Activated CD4-positive, alpha-beta T cell treated with anti-CD3 and anti-CD28 coated beads for 36 hours (primary cell): ENCODE measurements at regions of chr10 and their contacts with region 1.

Region 1: DNA sequence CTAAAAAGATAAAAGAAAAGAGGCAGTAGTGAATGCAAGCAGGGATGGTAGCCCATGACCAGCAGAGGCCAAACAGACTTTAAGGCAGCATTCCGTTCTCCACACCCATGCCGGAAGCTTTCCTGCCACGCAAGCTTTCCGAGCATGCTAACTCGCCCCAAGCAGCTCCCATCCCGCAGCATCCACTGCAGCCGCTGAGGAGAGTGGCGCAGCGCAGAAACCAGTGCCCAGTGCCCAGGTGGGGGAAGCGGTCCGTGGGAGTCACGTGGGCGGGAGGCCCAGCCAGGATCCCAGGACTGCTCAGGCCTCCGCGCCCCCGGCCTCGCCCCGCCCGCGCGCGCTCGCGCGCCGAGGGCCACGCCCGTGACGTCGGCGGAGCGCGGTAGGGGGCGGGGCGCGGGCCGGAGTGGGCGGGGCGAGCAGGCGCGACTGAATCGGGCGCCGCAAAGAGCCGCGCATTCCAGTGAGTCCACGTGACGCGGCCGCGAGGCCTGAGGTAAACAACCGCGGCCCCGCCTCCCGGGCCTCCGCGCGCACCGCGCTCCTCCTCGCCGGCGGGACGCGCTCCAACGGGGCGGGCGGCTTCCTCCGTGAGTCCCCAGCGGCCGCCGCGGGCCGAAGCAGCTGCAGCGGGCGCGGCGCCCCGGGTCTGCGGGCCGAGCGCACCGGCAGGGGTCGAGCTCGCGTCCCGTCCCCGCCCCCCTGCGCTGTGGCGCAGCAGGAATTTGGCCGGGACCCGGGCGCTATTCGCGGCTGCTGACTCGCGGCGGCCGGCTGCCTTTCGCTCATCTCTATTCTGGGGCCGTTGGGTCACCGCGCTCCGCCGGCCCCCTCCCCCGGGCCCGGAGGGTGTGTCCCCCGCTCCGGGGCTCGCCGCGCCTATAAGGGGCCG is at the start of gene OTUD1:
- DNase-seq: peak; percentile 96
- ATAC-seq: peak; percentile 88
- H3K4me3 Mint-ChIP-seq: peak within 1 kb of the TSS; percentile 85
- H3K27ac Mint-ChIP-seq: peak within 1 kb of the TSS; percentile 91
- H3K4me1 Mint-ChIP-seq: peaks cover 28% of the 10 kb centered on the region
- H3K27me3 Mint-ChIP-seq: no peaks in the 10 kb centered on the region
- total RNA-seq, gene OTUD1: 5.7 to 6.5 TPM

Region 2: DNA sequence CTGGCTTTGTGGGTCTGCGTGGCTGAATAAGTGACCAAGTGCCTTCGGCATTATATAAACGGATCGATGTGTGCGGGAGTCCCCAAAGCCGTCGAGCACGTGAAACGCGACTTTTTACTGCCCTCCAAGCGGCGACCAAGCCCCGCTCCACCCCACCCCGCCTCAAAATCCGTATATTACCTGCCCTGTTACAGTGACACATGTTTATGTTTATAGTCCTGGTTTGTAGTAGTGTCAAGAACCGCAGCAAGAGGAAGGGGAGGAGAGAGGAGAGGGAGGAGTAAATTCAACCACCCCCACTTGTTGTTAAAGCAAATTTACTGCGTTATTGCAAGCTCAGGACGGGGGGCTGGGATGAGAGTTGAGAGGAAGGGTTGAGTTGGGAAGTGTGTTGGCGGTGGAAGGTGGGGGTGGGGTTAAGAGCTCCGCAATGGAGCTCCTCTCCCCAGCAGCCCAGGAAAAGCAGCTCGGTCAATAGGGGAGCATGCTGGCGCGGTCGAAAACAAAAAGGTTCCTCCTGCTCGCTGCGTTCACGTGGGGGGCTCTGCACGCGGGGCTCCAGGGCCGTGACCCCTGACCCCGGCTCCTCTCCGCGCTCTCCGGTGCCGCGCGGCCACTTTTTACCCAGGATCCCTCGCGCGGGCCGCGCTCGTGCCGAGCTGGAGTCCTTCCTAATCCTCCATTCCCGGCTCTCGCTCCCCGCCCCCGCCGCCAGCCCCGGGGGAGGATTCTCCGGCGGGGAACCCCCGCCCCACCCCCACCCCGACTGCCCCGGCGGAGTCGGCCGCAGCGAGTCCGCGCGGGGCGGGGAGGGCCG is 1913.2 kb before region 1 on chr10 and contains the start of gene SKIDA1:
- CTCF ChIA-PET with region 1: no interaction called
- POLR2A ChIA-PET with region 1: no interaction called
- intact Hi-C with region 1: loop called in 1 of 2 experiments (anchors 10 kb)
- DNase-seq: peak; percentile 81
- ATAC-seq: peak; percentile 71
- H3K4me3 Mint-ChIP-seq: peak within 1 kb of the TSS; percentile 80
- H3K27ac Mint-ChIP-seq: peak within 1 kb of the TSS; percentile 96
- H3K4me1 Mint-ChIP-seq: peaks cover 24% of the 10 kb centered on the region
- H3K27me3 Mint-ChIP-seq: peaks cover 17% of the 10 kb centered on the region
- total RNA-seq, gene SKIDA1: 0.32 to 0.54 TPM

Region 3: GRCh38 chr10:23095404-23095965 is 343.3 kb before region 1 on chr10 and contains the start of gene MSRB2:
- CTCF ChIA-PET with region 1: no interaction called
- POLR2A ChIA-PET with region 1: no interaction called
- intact Hi-C with region 1: loop called (anchors 1 to 5 kb)
- DNase-seq: peak; percentile 84
- ATAC-seq: peak; percentile 58
- H3K4me3 Mint-ChIP-seq: peak within 1 kb of the TSS; percentile 95
- H3K27ac Mint-ChIP-seq: peak within 1 kb of the TSS; percentile 92
- H3K4me1 Mint-ChIP-seq: peaks cover 39% of the 10 kb centered on the region
- H3K27me3 Mint-ChIP-seq: no peaks in the 10 kb centered on the region
- total RNA-seq, gene MSRB2: 8.2 to 9.0 TPM

Region 4: GRCh38 chr10:23362879-23363792 is 75.7 kb before region 1 on chr10:
- CTCF ChIA-PET with region 1: interaction called, 3 read pairs
- POLR2A ChIA-PET with region 1: no interaction called
- intact Hi-C with region 1: loop called (anchors 1 to 2 kb)
- DNase-seq: peak; percentile 67
- ATAC-seq: peak; percentile 75
- H3K4me3 Mint-ChIP-seq: peak overlapping the region; percentile 39
- H3K27ac Mint-ChIP-seq: peak overlapping the region; percentile 96
- H3K4me1 Mint-ChIP-seq: peaks cover 60% of the 10 kb centered on the region
- H3K27me3 Mint-ChIP-seq: no peaks in the 10 kb centered on the region

Region 5: DNA sequence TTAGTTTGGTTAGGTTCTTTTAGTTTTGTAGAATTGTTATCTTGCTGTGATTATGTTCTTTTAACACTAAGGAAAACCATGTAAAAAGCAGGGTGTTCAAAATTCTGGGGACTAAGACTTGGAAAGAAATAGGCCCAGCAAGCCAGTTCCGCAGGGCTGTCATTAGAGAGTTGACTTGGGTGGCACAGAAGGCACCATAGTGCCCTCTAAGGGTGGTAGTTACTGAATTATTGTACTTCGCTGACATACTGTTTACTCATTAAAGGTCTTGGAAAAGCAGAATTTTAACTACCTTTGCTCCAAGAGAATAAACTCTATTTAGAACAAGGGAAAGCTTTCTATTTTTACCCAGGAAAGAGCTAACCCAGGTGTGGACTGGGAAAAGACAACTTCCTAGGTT is 86.6 kb after region 1 on chr10:
- CTCF ChIA-PET with region 1: interaction called, 4 read pairs
- POLR2A ChIA-PET with region 1: no interaction called
- intact Hi-C with region 1: loop called in 1 of 2 experiments (anchors 5 kb)
- DNase-seq: peak; percentile 26
- ATAC-seq: peak; percentile 47
- H3K4me3 Mint-ChIP-seq: no peak overlapping the region
- H3K27ac Mint-ChIP-seq: no peak overlapping the region
- H3K4me1 Mint-ChIP-seq: peaks cover 3% of the 10 kb centered on the region
- H3K27me3 Mint-ChIP-seq: peaks cover 5% of the 10 kb centered on the region

Region 6: DNA sequence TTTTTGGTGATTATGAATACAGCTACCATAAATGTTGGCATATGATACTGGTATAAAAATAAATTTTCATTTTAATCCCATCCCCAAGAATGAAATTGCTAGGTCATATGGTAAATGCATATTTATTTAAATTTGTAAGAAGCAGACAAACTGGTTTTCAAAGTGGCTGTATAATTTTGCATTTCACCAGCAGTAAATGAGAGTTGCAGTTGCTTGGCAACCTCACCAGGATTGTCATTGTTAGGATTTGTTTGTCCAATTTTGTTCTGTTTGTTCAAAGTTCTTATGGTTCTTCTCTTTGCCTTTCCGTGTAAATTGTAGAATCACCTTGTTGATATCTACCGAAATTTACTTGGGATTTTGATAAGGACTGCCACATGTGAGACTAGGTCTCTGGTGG is 237.5 kb after region 1 on chr10:
- CTCF ChIA-PET with region 1: no interaction called
- POLR2A ChIA-PET with region 1: no interaction called
- intact Hi-C with region 1: no loop called
- DNase-seq: no peak
- ATAC-seq: no peak
- H3K4me3 Mint-ChIP-seq: no peak overlapping the region
- H3K27ac Mint-ChIP-seq: no peak overlapping the region
- H3K4me1 Mint-ChIP-seq: no peaks in the 10 kb centered on the region
- H3K27me3 Mint-ChIP-seq: peaks cover 19% of the 10 kb centered on the region

Region 7: DNA sequence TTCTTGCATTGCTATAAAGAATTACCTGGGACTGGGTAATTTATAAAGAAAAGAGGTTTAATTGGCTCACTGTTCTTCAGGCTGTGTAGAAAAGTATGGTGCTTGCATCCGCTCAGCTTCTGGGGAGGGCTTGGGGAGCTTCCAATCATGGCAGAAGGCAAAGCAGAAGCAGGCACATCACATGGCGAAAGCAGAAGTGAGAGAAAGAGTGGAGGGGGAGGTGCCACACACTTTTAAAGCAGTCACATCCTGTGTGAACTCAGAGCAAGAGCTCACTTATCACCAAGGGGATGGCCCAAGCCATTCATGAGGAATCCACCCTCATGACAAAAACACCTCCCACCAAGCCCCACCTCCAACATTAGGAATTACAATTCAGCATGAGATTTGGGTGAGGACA is 303.6 kb after region 1 on chr10:
- CTCF ChIA-PET with region 1: no interaction called
- POLR2A ChIA-PET with region 1: no interaction called
- intact Hi-C with region 1: no loop called
- DNase-seq: peak; percentile 19
- ATAC-seq: peak; percentile 58
- H3K4me3 Mint-ChIP-seq: no peak overlapping the region
- H3K27ac Mint-ChIP-seq: no peak overlapping the region
- H3K4me1 Mint-ChIP-seq: no peaks in the 10 kb centered on the region
- H3K27me3 Mint-ChIP-seq: peaks cover 7% of the 10 kb centered on the region

Region 8: DNA sequence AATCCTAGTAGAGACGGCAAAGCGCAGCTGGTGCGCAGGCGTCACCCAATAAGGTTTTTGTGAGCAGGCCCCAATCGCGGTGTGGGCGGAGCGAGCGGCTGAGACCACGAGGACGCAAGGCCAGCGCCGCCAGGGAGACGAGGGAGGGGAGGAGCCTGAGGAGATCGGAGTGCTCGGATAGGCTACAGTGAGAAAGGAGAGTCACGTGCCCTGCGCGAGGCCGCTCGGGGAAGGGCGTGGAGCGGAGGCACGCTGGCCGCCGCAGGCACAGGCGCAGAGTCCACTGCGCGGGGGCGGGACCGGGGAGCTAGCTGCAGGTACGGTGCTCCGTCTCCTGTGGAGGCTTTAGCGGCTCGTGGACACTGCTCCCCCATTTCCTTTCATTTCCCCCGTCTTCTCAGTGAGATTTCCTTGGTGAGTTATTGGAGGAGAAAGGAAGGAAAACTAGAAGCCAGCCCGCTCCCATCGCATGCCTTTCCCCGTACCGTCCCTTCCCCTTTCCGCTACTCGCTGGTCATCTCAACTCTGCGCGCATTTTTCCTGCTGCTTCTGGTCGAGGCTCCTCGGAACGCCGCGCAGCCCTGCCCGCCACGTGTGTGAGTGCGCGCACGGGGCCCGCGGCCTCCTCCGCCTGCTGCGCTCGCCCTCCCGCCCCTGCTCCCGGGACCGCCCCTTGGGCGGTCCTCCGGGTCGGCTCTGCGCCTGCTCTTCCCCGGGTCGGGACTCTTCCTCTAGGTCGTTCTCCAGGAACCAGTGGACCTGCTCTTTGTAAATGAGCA is 1577.8 kb after region 1 on chr10 and contains the start of gene THNSL1:
- CTCF ChIA-PET with region 1: no interaction called
- POLR2A ChIA-PET with region 1: no interaction called
- intact Hi-C with region 1: loop called in 1 of 2 experiments (anchors 2 kb)
- DNase-seq: peak; percentile 98
- ATAC-seq: peak; percentile 99
- H3K4me3 Mint-ChIP-seq: peak within 1 kb of the TSS; percentile 85
- H3K27ac Mint-ChIP-seq: peak within 1 kb of the TSS; percentile 98
- H3K4me1 Mint-ChIP-seq: peaks cover 23% of the 10 kb centered on the region
- H3K27me3 Mint-ChIP-seq: no peaks in the 10 kb centered on the region
- total RNA-seq, gene THNSL1: 8.0 to 9.5 TPM